ENCODE measurements at regions of chr7 and their contacts with region 1.

Region 1: GRCh38 chr7:16645593-16646471 is at the starts of genes ANKMY2 and BZW2:
- DNase-seq: peak; percentile 96 to 98
- H3K4me3 ChIP-seq: peak within 1 kb of the TSS; percentile 77
- H3K27ac ChIP-seq: peak within 1 kb of the TSS; percentile 82
- H3K4me1 ChIP-seq: peaks cover 51% of the 10 kb centered on the region
- H3K27me3 ChIP-seq: no peaks in the 10 kb centered on the region
- CTCF ChIP-seq: no peak
- total RNA-seq, gene ANKMY2: 22.9 and 30.7 TPM in 2 replicates
- total RNA-seq, gene BZW2: 93.7 and 102 TPM in 2 replicates

Region 2: DNA sequence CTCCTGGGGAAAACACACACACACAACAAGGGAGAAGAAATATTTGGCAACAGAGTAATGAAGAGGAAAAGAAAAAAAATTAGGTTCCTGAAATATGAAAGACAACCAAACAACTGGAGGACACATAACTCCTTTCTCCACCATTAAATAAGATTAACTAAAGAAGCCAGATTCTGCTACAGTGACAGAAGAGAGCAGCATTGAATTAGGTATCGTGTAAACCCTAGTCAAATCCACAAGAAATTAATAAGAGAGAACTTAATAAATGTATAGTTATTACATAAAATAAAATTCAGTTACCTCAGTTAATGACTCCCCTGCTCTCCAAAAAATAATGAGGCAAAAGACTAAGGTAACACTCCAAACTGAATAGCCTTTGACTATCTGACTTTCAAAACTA is 531.2 kb before region 1 on chr7:
- CTCF ChIA-PET with region 1: no interaction called
- POLR2A ChIA-PET with region 1: no interaction called
- intact Hi-C with region 1: loop called (anchors 5 kb)
- DNase-seq: no peak
- H3K4me3 ChIP-seq: no peak overlapping the region
- H3K27ac ChIP-seq: no peak overlapping the region
- H3K4me1 ChIP-seq: no peaks in the 10 kb centered on the region
- H3K27me3 ChIP-seq: no peaks in the 10 kb centered on the region
- CTCF ChIP-seq: peak; percentile 82

Region 3: GRCh38 chr7:16528520-16528919 is 117.3 kb before region 1 on chr7:
- CTCF ChIA-PET with region 1: no interaction called
- POLR2A ChIA-PET with region 1: no interaction called
- intact Hi-C with region 1: no loop called
- DNase-seq: no peak
- H3K4me3 ChIP-seq: no peak overlapping the region
- H3K27ac ChIP-seq: no peak overlapping the region
- H3K4me1 ChIP-seq: peaks cover 7% of the 10 kb centered on the region
- H3K27me3 ChIP-seq: no peaks in the 10 kb centered on the region
- CTCF ChIP-seq: no peak

Region 4: GRCh38 chr7:16543456-16543855 is 102.4 kb before region 1 on chr7:
- CTCF ChIA-PET with region 1: no interaction called
- POLR2A ChIA-PET with region 1: no interaction called
- intact Hi-C with region 1: no loop called
- DNase-seq: no peak
- H3K4me3 ChIP-seq: no peak overlapping the region
- H3K27ac ChIP-seq: no peak overlapping the region
- H3K4me1 ChIP-seq: no peaks in the 10 kb centered on the region
- H3K27me3 ChIP-seq: no peaks in the 10 kb centered on the region
- CTCF ChIP-seq: no peak

Region 5: DNA sequence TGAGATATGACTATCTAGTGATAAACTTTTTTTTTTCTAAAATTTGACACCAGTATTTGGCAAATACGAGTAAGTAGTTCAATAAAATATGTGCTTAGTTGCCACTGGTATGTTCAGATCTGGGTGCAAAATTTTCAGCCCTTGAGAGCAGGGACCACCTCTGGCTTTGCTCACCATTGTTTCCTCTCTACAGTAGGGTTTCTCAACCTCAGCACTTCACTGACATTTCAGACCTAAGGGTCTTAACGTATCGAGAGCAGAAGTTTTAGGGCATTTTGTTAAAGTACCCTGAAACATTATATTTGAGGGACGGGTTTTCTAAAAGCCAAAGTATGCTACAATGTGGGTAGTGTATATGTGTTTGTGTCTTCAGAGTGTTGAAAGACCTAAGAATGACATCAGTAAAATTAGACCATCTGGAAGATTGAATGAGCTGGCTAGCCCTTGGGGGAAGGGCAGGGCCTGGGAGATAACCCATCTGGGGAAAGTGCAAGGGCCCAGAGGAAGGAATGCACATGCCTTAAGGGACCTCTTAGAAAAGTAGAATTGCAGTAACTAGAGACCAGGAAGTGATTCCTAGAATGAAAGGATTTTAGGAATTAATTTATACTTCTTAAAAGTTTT is 11.9 kb after region 1 on chr7:
- CTCF ChIA-PET with region 1: no interaction called
- POLR2A ChIA-PET with region 1: interaction called, 3 read pairs
- intact Hi-C with region 1: loop called (anchors 1 kb)
- DNase-seq: peak; percentile 79 to 83
- H3K4me3 ChIP-seq: no peak overlapping the region
- H3K27ac ChIP-seq: peak overlapping the region; percentile 47
- H3K4me1 ChIP-seq: peaks cover 58% of the 10 kb centered on the region
- H3K27me3 ChIP-seq: no peaks in the 10 kb centered on the region
- CTCF ChIP-seq: no peak

Region 6: GRCh38 chr7:16688249-16688648 is 42.4 kb after region 1 on chr7:
- CTCF ChIA-PET with region 1: no interaction called
- POLR2A ChIA-PET with region 1: interaction called, 4 read pairs
- intact Hi-C with region 1: loop called (anchors 5 kb)
- DNase-seq: peak in 1 of 2 experiments; percentile 58
- H3K4me3 ChIP-seq: no peak overlapping the region
- H3K27ac ChIP-seq: no peak overlapping the region
- H3K4me1 ChIP-seq: no peaks in the 10 kb centered on the region
- H3K27me3 ChIP-seq: no peaks in the 10 kb centered on the region
- CTCF ChIP-seq: no peak

Region 7: GRCh38 chr7:16801111-16801542 is 155.3 kb after region 1 on chr7:
- CTCF ChIA-PET with region 1: no interaction called
- POLR2A ChIA-PET with region 1: no interaction called
- intact Hi-C with region 1: loop called (anchors 5 kb)
- DNase-seq: peak; percentile 15 to 79
- H3K4me3 ChIP-seq: no peak overlapping the region
- H3K27ac ChIP-seq: no peak overlapping the region
- H3K4me1 ChIP-seq: peaks cover 50% of the 10 kb centered on the region
- H3K27me3 ChIP-seq: no peaks in the 10 kb centered on the region
- CTCF ChIP-seq: peak; percentile 85

Measured in PC-9 (cell line).